ENCODE measurements at regions of chr6 and their contacts with region 1.

Region 1: DNA sequence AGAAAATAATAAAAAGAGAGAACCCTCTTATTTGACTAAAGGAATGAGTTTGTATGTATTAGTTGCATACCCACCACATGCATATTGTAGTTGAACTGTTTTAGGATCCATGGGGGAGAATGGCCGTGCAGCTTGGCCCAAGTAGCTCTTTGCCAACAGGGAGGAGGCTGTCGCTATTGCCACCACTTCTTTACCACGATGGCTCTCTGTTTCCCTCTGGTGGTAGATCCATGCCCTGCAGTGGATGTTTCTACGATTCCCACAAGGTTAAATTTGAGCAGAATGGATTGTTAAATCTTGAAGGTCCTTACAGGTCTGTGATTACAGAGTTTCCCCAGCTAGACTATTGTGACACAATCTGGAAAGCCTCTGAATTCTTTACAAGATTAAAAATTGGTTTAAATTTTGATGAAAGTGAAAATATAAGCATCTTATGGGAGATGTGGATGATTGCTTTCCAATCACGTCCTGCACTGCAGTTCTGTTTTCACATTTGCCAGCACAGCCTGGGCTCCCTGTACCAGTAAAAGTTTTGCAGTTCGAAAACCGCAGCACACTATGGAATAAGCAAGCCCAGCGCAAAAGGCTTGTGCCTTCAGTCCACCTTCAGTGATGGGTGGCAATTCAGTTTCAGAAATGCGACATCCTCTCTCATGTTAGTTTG is 34.4 kb upstream of the FNDC1 start:
- DNase-seq: peak; percentile 73 to 79
- H3K4me3 ChIP-seq: no peak overlapping the region
- H3K27ac ChIP-seq: no peak overlapping the region
- H3K4me1 ChIP-seq: peaks cover 5% of the 10 kb centered on the region in 2 donors
- H3K27me3 ChIP-seq: no peaks in the 10 kb centered on the region
- CTCF ChIP-seq: peak; percentile 83 to 95 (median 92)
- POLR2A ChIP-seq: no peak

Region 2: DNA sequence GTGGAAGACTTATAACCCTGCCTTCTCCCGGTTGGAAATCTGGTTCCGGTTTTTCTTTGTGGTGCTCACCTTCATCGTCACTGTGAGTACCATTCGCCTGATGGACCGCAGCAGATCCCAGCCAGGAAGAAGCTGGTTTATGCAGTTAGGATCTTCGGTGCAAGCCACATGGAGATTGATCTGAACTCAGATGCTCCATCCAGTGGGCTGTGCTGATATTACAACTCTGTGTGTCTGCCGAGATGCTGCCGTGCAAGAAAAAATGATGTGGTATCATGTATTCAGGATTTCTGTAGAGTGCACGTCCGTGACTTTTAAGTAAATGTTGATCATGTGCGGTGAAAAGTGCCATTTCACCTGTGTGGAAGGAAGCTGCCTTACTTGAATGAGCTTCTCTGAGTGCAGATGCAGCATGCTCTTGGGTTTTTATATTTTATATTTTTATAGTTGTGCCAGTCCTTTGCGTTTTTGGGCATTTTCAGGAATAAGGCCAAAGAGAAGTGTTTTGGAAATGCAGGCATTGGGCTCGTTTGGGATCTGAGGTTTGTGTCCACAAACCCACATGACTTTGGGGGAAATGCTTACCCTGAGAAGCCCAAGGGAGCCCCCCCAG is 529.5 kb before region 1 on chr6:
- intact Hi-C with region 1: no loop called
- DNase-seq: peak; percentile 61 to 64
- H3K4me3 ChIP-seq: no peak overlapping the region
- H3K27ac ChIP-seq: no peak overlapping the region
- H3K4me1 ChIP-seq: no peaks in the 10 kb centered on the region
- H3K27me3 ChIP-seq: no peaks in the 10 kb centered on the region
- CTCF ChIP-seq: peak; percentile 59 to 85 (median 71)
- POLR2A ChIP-seq: no peak

Region 3: DNA sequence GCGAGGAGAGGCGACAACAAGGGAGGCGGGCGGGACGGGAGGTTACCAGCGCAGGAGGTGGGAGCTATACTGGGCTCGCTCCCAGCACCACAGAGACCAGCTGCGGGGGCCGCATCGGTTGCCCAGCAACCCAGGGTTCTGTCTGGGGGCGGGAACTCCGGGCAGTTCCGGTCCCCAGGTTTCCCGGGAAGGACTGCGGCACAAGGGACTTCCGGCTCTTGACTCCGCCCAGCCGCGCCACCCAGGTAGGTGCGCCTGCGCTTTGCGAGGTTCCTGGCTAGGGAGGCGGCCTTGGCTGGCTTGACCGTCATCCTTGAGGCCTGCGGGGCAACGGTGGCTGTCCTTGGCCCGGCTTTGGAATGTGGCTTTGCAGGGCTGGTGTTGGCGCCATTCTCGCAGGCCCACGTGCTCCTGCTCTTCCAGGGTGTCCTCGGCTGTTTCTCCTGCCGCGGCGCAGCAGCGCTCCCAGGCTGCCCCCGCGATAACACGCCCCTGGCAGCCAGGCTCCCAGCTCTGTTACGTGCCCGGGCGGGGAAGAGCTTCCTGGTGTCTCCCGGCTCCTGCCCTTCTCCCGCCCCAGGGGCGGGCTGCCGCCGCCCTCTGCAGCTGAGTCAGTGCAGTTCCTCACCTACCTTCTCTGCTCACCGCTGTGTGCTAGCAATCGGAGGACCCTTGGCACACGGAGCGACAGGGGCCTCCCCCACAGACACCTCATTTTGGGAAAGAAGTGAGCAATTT is 135.0 kb before region 1 on chr6 and contains the start of gene RSPH3:
- intact Hi-C with region 1: loop called (anchors 10 kb)
- DNase-seq: peak; percentile 97 to 98
- H3K4me3 ChIP-seq: peak within 1 kb of the TSS; percentile 83 to 95 (median 84)
- H3K27ac ChIP-seq: peak within 1 kb of the TSS; percentile 33 to 87 (median 74)
- H3K4me1 ChIP-seq: peaks cover 6 to 8% of the 10 kb centered on the region in 2 donors
- H3K27me3 ChIP-seq: no peaks in the 10 kb centered on the region
- CTCF ChIP-seq: peak in 4 of 6 experiments; percentile 20 to 46 (median 32)
- POLR2A ChIP-seq: peak in 1 of 2 donors; percentile 91
- total RNA-seq, gene RSPH3: 16.8 to 22.5 (median 20.2) TPM

Region 4: DNA sequence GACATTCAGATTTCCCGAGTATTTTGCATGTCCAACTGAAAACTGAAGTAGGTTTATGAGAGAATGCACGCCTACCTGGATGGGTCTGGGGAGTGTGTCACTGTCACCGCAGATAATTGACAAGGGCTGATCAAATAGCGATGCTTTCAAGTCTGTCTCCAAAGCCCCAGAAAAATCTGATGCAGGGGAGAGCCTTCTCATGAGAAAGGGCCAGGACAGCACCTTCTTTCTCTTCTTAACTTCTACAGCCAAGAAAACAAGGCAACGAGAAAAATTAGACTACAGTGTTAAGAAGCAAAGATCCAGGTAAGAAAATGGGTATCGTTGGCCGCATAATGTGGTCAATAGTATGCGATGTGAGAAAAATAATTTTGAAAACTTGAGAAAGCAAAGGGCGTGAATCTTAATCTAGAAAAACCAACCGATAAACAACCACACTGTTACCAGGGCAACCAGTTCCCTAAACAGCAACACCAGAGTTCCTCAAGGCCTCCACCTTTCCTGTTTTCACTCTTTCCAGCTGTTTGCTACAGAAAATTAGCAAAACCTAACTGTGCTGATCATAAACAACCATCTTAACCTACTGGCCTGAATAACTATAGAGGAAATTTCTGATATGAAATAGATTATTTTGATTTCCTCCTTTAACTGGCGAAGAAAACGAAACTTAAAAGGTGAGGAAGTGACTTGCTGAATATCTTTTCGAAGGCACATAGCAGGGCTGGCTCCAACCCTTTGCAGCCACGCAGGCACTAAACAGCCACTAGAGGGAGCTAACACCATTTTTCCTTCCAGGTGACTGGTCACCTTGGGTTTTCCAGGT is 92.6 kb before region 1 on chr6:
- intact Hi-C with region 1: loop called (anchors 10 kb)
- DNase-seq: peak; percentile 66 to 75
- H3K4me3 ChIP-seq: no peak overlapping the region
- H3K27ac ChIP-seq: no peak overlapping the region
- H3K4me1 ChIP-seq: peaks cover 0 to 3% of the 10 kb centered on the region in 2 donors
- H3K27me3 ChIP-seq: no peaks in the 10 kb centered on the region
- CTCF ChIP-seq: peak; percentile 69 to 93 (median 88)
- POLR2A ChIP-seq: no peak